Right ventricle myocardium inferior (tissue), 1 donor: ENCODE measurements at regions of chr2 and their contacts with region 1.

Region 1: GRCh38 chr2:206800506-206801417 is 35.4 kb downstream of the FASTKD2 start:
- DNase-seq: peak; percentile 51
- ATAC-seq: peak; percentile 70

Region 2: DNA sequence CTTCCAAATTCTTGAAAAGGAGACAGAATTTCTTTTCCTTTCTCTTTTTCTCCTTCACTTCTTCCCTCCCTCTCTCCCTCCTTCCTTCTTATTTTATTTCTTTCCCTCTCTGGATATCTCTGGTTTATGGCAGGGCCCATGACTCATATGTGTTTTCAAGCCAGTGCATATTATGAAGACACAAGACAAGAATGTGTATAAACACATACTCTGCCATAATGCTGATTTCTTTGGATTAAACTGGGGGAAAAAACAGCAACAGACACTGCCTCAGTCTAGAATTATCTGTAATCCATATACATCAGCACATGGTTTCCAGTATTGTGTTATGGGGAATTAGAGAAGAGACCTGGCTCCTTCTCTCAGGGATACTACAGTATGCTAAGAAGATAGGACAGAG is 55.8 kb after region 1 on chr2:
- intact Hi-C with region 1: loop called (anchors 5 kb)
- DNase-seq: no peak
- ATAC-seq: no peak

Region 3: GRCh38 chr2:206981739-206982340 is 181.1 kb after region 1 on chr2:
- intact Hi-C with region 1: loop called (anchors 2 kb)
- DNase-seq: peak; percentile 69
- ATAC-seq: peak; percentile 83

Region 4: DNA sequence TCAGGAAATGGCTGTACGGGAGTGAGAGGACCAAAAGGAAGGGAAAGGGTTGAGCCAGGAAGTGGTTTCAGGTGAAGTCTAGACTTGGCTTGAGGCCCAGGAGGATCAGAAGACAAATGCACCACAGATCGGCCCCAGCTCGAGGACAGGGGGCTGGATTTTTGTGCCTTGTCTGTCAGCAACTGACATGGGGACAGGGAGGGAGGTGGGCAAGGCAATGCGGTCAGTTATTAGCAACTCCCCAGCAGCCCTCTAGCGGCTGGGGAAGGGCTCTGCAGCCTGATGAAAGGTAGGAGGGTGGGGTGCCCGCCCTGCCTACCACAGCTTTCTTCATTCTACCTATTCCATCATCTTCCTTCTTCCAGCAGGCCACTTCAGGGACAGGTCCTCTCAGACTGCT is 188.5 kb after region 1 on chr2:
- intact Hi-C with region 1: loop called (anchors 1 kb)
- DNase-seq: peak; percentile 74
- ATAC-seq: peak; percentile 76